ENCODE measurements at regions of chr22 and their contacts with region 1.

Region 1: DNA sequence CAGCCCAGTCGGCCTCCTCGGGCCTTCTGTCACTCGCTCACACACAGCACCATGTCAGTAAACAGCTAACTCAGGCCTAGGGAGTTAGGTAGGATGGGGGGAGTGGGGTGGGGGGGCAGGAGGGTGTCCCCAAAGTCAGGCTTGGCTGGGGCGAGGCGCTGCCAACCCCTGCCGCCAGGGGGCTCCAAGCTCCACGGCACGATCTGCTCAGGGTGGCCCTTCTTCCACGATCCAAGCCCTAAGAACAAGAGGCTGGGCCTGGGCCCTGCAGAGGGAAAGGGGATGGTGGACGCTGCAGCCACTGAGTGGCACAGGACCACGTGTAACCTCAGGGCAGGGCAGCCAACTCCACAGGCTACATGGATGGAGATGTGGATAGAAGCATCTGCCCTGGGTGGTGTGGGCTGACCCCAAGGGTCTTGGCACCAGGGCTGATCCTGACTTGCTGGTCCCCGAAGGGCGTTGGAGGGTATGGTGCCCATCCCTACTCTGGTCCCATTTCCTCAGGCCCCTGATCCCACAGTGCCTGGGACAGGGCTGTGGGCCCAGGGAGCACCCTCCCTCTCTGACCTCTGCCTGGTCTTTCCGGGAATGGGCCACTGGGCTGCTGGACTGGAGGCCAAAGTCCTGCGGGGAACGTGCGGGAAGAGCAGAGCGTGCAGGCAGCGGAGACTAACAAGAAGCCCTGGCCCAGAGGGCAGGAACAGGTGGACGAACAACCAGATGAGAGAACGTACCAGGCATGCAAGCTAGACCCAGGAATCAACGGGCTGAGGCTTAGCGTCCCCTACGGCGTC is 29.1 kb upstream of the TXNRD2 start:
- DNase-seq: peak; percentile 66 to 82 (median 75)
- H3K4me3 ChIP-seq: no peak overlapping the region
- H3K4me3 Mint-ChIP-seq: no peak overlapping the region
- H3K27ac ChIP-seq: no peak overlapping the region
- H3K27ac Mint-ChIP-seq: peak overlapping the region in 1 of 8 donors; percentile 30
- H3K4me1 ChIP-seq: peaks cover 31% of the 10 kb centered on the region
- H3K4me1 Mint-ChIP-seq: peaks cover 6 to 17% (median 12%) of the 10 kb centered on the region in 3 donors
- H3K27me3 ChIP-seq: no peaks in the 10 kb centered on the region
- H3K27me3 Mint-ChIP-seq: no peaks in the 10 kb centered on the region

Region 2: DNA sequence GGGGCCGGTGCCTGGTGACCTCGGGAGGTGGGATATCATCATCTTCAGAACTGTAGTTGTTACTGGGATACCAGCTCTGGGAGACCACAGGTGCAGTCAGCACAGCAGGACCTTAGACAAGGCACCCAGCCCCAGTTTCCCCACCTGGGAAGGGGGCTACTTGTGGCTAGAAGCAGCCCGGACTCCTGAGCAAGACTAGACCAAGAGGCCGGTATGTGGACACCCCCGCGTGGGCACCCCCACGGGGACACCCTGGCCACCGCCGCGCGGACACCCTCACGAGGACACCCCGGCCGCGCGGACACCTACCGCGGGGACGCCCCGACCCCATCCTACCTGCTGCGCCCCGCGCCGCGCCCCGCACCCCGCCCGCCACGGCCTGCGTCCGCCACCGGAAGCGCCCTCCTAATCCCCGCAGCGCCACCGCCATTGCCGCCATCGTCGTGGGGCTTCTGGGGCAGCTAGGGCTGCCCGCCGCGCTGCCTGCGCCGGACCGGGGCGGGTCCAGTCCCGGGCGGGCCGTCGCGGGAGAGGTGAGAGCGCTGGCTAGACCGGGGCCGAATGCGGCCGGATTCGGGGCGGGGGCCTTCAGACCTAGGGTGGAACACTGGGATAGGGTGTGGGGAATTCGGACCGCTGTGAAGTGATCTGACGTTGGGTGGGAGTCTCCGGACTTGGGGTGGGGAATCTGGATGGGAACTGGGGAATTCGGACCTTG is 29.2 kb before region 1 on chr22 and contains the starts of genes COMT and TXNRD2:
- CTCF ChIA-PET with region 1: no interaction called
- POLR2A ChIA-PET with region 1: no interaction called
- DNase-seq: peak; percentile 55 to 82 (median 67)
- H3K4me3 ChIP-seq: peak within 1 kb of the TSS; percentile 97
- H3K4me3 Mint-ChIP-seq: peak within 1 kb of the TSS; percentile 85 to 96 (median 94)
- H3K27ac ChIP-seq: peak within 1 kb of the TSS; percentile 99
- H3K27ac Mint-ChIP-seq: peak within 1 kb of the TSS; percentile 81 to 98 (median 95)
- H3K4me1 ChIP-seq: peaks cover 31% of the 10 kb centered on the region
- H3K4me1 Mint-ChIP-seq: peaks cover 38 to 54% (median 45%) of the 10 kb centered on the region in 3 donors
- H3K27me3 ChIP-seq: no peaks in the 10 kb centered on the region
- H3K27me3 Mint-ChIP-seq: no peaks in the 10 kb centered on the region
- total RNA-seq, gene COMT: 89.3 to 93.7 TPM
- total RNA-seq, gene TXNRD2: 27.6 to 27.9 TPM

Region 3: GRCh38 chr22:20013382-20013871 is 42.8 kb after region 1 on chr22:
- CTCF ChIA-PET with region 1: interaction called, 11 read pairs
- POLR2A ChIA-PET with region 1: no interaction called
- DNase-seq: peak in 2 of 5 donors; percentile 34 to 59
- H3K4me3 ChIP-seq: no peak overlapping the region
- H3K4me3 Mint-ChIP-seq: no peak overlapping the region
- H3K27ac ChIP-seq: peak overlapping the region; percentile 21
- H3K27ac Mint-ChIP-seq: no peak overlapping the region
- H3K4me1 ChIP-seq: peaks cover 37% of the 10 kb centered on the region
- H3K4me1 Mint-ChIP-seq: peaks cover 8 to 15% (median 9%) of the 10 kb centered on the region in 3 donors
- H3K27me3 ChIP-seq: no peaks in the 10 kb centered on the region
- H3K27me3 Mint-ChIP-seq: no peaks in the 10 kb centered on the region

Region 4: DNA sequence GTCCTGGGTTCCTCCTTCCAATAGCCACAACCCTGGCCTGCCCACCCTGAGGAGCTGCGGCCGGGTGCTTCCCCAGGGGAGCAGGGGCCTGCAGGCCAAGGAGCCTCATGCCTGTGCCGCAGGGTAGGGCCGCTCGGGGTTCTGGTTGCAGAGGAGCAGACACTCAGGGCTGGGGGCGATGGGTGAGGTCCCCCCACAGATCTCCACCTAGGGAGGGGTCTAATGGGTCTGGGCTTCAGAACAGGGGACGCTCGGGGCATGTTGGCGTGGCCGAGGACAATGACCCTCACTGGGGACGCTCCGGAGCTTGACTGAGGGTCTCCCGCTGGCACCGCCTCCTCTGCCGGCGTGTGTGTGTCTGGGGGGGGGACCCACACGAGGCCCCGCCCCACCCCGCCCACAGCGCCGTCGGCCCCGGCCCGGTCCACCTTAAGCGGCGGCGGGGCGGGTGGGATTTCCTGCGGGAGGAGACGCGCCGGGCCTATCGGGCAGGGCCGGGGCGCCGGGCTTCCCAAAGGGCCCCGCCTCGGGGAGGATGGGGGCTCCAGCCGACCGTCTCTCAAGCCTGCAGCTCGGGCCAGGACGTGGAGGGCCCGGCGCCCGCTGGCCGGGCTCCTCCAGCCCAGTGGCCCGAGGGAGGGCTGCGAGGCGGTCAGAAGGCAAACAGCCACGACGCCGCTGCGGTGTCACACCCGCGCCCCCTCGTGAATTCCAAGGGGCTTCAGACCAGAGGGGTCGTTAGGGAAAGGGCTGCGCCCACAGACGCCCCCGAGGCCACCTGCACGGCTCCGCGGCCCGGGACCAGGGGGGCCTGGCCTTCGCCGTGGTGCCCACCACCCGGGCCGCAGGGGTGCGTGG is 160.3 kb after region 1 on chr22:
- CTCF ChIA-PET with region 1: interaction called, 25 read pairs
- POLR2A ChIA-PET with region 1: interaction called, 7 read pairs
- DNase-seq: peak; percentile 71 to 84 (median 74)
- H3K4me3 ChIP-seq: peak overlapping the region; percentile 71
- H3K4me3 Mint-ChIP-seq: peak overlapping the region; percentile 41 to 77 (median 62)
- H3K27ac ChIP-seq: peak overlapping the region; percentile 79
- H3K27ac Mint-ChIP-seq: peak overlapping the region in 4 of 8 donors; percentile 34 to 92 (median 62)
- H3K4me1 ChIP-seq: peaks cover 38% of the 10 kb centered on the region
- H3K4me1 Mint-ChIP-seq: peaks cover 17 to 45% (median 25%) of the 10 kb centered on the region in 3 donors
- H3K27me3 ChIP-seq: no peaks in the 10 kb centered on the region
- H3K27me3 Mint-ChIP-seq: no peaks in the 10 kb centered on the region

Measured in CD8-positive, alpha-beta memory T cell (primary cell).